AG04450 (cell line): ENCODE measurements at regions of chr14 and their contacts with region 1.

Region 1: DNA sequence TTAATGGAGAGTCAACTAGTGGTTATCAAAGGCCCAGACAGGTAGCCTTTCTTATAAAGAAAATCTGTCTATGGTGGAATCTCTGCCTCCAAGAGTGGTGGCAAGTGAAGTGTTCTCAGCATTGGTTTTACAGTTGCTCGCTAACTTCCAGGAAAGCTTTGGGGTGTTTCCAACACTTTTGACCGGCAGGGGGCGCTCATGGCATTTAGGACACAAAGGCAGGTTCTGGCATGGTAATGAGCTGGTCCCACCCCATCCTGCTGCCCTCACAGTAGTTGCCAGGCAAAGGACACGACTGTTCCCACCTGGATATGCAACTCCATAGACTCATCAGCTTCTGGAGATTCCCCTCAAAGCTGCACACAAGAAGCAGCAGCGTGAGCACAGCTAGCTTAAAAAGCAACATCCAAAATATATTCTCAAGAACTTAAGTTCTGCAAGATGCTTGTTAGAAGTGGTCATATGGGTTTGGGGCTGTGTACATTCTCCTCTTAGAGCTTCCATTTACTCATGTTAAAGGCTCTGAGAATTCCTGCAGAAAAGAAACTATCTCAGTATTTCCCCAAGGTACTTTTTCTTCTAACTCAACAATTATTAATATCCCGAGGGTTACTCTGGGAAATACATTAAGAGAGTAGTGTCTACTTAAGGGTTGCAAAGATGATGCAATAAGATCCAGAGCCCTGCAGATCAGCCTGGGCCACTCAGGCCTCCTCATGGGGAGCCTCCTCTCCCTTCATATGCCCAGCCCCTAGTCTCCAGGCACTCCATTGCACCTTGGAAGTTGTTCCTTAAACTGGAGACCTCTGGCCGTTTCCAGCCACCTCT is 14.8 kb downstream of the PROX2 start:
- DNase-seq: peak; percentile 57
- H3K4me3 ChIP-seq: no peak overlapping the region
- H3K27ac ChIP-seq: no peak overlapping the region
- H3K27me3 ChIP-seq: peaks cover 4% of the 10 kb centered on the region
- CTCF ChIP-seq: peak; percentile 86

Region 2: GRCh38 chr14:74841230-74842207 is 19.6 kb before region 1 on chr14:
- CTCF ChIA-PET with region 1: interaction called, 22 read pairs
- POLR2A ChIA-PET with region 1: no interaction called
- DNase-seq: no peak
- H3K4me3 ChIP-seq: no peak overlapping the region
- H3K27ac ChIP-seq: no peak overlapping the region
- H3K27me3 ChIP-seq: no peaks in the 10 kb centered on the region
- CTCF ChIP-seq: no peak

Region 3: GRCh38 chr14:74881431-74882361 is 20.6 kb after region 1 on chr14 and contains the start of gene DLST:
- CTCF ChIA-PET with region 1: interaction called, 173 read pairs
- POLR2A ChIA-PET with region 1: interaction called, 11 read pairs
- DNase-seq: peak; percentile 66
- H3K4me3 ChIP-seq: peak within 1 kb of the TSS; percentile 86
- H3K27ac ChIP-seq: peak within 1 kb of the TSS; percentile 85
- H3K27me3 ChIP-seq: no peaks in the 10 kb centered on the region
- CTCF ChIP-seq: no peak
- polyA plus RNA-seq, gene DLST: 148 and 150 TPM in 2 replicates

Region 4: DNA sequence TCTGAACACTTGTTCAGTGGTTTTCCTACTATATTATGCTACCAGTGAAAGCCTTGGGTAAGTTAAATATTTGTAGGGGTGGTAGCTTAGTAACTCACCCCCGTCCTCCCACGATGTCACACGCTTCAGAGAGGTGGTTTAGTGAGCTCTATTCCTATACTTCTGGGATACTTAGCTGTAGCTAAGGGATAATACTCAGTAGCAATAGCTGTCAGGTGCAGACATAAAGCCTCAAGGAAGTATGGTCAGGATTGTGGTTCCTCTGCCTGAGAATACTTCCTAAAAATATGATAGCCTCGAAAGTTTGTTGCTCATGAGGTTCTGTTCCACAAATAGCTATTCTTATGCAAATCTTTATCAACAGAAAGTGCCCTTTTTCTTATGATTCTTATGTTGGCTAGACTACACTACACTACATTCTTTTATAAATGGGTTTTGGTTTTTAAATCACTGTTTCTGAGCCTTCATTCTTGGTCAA is 32.5 kb after region 1 on chr14:
- CTCF ChIA-PET with region 1: interaction called, 52 read pairs
- POLR2A ChIA-PET with region 1: interaction called, 4 read pairs
- DNase-seq: no peak
- H3K4me3 ChIP-seq: no peak overlapping the region
- H3K27ac ChIP-seq: no peak overlapping the region
- H3K27me3 ChIP-seq: no peaks in the 10 kb centered on the region
- CTCF ChIP-seq: no peak

Region 5: DNA sequence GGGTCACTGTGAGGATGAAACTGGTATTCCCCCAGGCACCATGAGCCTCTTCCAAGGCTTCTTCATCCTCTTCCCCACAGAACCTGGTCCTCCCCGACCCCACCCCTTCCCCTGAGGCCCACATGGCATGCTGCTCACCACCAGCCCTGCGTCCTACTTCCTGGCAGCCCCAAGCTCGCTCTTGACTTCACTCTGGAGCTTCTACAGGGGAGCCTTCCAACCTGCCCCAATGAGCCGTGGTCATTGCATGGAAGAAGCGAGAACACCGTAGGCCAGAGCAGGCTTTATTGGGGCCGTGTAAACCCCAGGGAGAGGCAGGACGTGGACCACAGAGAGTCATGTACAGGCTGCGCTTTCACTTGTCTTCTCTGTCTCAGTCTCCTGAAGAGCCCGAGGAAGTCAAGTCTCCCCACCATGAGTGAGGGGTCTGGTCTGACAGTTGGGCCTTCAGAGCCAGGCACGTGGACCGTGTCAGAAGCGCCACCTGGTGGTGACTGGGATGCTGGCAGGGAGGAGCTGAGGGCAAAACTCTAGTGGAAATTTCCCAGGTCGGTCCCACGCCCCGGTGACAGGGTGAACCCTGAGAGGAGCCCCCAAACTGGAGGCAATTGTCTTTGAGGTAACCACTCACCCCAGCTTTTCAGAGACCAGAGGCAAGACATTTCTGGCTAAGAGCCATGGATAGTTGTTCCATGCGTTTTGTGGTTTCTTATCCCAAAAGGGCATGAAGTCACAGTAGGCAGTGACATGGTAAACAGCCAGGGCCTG is 44.4 kb after region 1 on chr14:
- CTCF ChIA-PET with region 1: interaction called, 227 read pairs
- POLR2A ChIA-PET with region 1: interaction called, 6 read pairs
- DNase-seq: no peak
- H3K4me3 ChIP-seq: no peak overlapping the region
- H3K27ac ChIP-seq: no peak overlapping the region
- H3K27me3 ChIP-seq: no peaks in the 10 kb centered on the region
- CTCF ChIP-seq: peak; percentile 96

Region 6: DNA sequence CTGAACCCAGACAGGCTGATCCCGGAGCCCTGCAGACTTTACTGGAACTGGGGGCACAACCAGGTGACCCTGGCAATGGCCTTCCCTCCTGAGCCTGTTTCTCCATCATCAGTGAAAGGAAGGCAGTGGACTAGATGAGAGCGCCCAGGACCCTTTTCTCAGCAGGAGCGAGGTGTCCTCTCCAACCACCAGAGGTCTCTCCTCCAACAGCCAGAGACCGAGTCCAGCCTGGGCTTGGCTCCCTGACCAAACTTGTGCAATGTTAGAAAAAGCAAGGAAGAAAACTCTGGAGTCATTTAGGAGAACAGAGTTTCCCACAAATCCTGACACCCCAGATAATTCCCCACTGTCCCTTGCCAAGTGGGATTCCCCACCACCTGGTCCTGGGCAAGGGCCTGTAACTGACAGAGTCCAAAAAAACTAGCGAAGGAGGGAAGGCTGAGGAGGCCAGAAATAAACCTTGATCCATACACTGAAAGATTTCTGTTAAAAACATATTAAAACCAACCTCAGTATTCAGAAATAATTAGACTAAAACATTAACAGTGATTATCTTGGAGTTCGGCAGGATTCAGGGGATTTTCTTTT is 53.0 kb after region 1 on chr14:
- CTCF ChIA-PET with region 1: interaction called, 227 read pairs
- POLR2A ChIA-PET with region 1: no interaction called
- DNase-seq: peak; percentile 46
- H3K4me3 ChIP-seq: no peak overlapping the region
- H3K27ac ChIP-seq: no peak overlapping the region
- H3K27me3 ChIP-seq: no peaks in the 10 kb centered on the region
- CTCF ChIP-seq: peak; percentile 94

Region 7: DNA sequence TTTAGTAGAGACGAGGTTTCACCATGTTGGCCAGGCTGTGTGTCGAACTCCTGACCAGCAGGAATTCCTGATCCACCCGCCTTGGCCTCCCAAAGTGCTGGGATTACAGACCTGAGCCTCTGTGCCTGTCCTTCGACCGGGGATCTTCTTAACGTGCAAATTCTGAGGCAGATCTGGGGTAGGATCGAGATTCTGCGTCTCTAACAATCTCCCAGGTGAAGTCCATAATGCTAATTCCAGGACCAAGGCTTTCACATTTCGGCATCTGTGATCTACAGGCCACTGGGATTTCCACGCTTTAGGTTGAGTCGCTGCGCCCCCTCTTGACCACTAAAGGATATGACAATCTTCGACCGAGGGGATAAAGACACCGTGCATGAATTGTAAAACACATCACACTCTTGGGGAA is 442.3 kb after region 1 on chr14:
- CTCF ChIA-PET with region 1: no interaction called
- POLR2A ChIA-PET with region 1: no interaction called
- DNase-seq: no peak
- H3K4me3 ChIP-seq: no peak overlapping the region
- H3K27ac ChIP-seq: no peak overlapping the region
- H3K27me3 ChIP-seq: no peaks in the 10 kb centered on the region
- CTCF ChIP-seq: peak; percentile 85

Region 8: DNA sequence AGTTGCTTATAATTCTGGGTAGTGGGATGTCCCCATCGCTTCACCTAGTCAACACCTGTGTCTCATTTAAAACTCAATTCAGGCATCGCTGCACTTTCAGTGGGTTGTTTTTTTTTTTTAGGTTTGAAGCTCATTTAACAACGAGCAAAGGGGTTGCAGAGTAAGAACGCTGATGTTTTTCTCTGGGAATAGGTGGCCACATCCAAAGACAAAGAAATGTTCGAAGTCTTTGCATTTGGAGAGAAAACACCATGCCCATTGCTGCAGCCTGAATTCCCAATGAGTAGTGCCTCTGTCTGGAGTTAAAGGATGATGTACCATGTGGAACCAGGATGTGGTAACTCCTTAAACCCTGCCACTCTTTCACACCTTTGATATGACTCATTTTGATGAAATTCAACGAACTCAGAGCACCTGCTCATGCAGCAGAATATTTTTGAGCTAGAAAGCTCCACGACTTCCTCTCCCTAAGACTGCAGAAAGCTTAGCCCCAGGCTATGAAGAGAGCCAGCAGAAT is 626.1 kb after region 1 on chr14:
- CTCF ChIA-PET with region 1: interaction called, 11 read pairs
- POLR2A ChIA-PET with region 1: no interaction called
- DNase-seq: no peak
- H3K4me3 ChIP-seq: no peak overlapping the region
- H3K27ac ChIP-seq: no peak overlapping the region
- H3K27me3 ChIP-seq: peaks cover 14% of the 10 kb centered on the region
- CTCF ChIP-seq: no peak